CD4-positive, alpha-beta memory T cell (primary cell): ENCODE measurements at regions of chr3 and their contacts with region 1.

Region 1: DNA sequence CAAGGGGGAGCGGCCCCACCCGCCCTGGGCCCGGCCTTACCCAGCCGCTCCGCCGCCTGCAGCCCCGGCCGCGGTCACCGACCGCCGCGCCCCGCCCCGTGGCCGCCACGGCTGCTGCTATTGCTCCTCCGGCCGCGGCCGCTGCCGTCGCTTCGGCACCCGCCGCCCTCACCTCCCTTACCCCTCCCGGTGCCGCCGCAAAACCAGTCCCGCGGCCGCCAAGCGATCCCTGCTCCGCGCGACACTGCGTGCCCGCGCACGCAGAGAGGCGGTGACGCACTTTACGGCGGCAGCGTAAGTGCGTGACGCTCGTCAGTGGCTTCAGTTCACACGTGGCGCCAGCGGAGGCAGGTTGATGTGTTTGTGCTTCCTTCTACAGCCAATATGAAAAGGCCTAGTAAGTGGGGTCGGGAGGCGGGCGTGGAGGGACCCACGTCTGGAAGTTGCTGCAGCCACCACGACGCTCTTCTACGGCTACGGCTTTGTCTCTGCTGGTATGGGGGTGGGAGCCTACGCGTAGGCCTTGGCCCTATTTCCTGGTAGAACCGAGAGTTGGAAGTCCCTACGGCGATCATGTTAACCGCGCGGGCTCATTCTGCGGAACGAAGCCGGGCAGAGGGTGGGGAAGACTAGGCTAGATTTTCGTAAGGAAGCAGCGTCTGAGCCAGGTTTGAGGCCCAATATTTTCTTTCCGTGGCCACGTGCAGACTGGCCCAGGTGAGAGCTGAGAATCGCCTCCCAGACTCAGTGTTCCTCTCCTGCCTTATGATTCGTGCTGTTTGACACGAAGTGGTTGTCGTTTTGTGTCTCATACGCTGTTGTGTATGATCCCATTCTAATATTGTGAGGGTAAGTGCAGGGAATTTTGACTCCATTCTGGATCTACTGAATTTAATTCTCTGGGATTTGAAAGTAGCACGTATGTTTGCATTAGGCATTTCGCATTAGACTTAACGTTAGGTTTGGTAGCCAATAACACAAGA is at the starts of genes GNL3 and PBRM1:
- DNase-seq: peak; percentile 91 to 95 (median 93)
- H3K4me3 ChIP-seq: peak within 1 kb of the TSS; percentile 79 to 96
- H3K4me3 Mint-ChIP-seq: peak within 1 kb of the TSS; percentile 95 to 99 (median 98)
- H3K27ac ChIP-seq: peak within 1 kb of the TSS; percentile 89
- H3K27ac Mint-ChIP-seq: peak within 1 kb of the TSS; percentile 95 to 99 (median 99)
- H3K4me1 ChIP-seq: peaks cover 50% of the 10 kb centered on the region
- H3K4me1 Mint-ChIP-seq: peaks cover 29 to 62% (median 46%) of the 10 kb centered on the region in 4 donors
- H3K27me3 ChIP-seq: no peaks in the 10 kb centered on the region
- H3K27me3 Mint-ChIP-seq: no peaks in the 10 kb centered on the region
- total RNA-seq, gene GNL3: 80.3 to 88.4 TPM
- total RNA-seq, gene PBRM1: 74.2 to 78.5 TPM

Region 2: DNA sequence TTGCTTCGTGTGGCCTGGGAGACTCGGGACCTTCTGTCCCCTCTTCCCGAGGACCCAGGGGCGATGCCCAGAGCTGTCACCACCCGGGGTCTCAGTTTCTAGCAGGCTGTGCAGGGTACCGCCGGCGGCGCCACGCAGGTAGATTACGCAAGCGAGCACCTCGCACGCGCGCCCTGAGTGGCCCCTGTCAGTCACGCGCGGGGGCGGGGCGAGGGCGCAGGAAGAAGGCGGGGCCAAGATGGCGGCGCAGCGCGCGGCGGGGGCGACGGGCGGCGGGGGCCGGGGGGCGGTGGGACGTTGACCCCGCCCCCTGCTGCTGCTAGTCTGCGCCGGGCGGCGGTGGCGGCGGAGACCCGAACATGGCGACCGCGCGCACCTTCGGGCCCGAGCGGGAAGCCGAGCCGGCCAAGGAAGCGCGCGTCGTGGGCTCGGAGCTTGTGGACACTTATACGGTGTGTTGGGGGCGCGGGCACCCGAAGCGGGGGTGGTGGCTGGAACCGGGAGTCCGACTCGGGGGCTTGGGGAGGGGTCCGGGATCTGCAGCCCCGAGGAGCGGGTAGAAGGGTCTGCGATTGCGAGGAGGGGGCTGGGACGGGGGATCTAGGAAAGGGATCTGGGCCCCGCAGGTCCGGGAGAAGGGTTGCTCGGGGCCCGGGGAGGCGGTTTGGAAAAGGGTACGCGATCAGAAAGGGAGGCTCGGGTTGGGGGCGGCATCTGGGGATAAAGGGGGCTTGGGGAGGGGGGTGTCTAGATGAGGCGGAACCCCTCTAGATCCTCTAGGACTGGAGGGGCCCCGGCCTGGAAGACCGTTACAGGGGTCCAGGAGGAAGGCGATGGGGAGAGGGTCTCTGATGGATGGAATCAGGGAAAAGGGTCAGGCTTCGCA is 230.5 kb before region 1 on chr3 and contains the start of gene NISCH:
- CTCF ChIA-PET with region 1: no interaction called
- POLR2A ChIA-PET with region 1: no interaction called
- intact Hi-C with region 1: loop called (anchors 10 kb)
- DNase-seq: peak; percentile 93 to 98 (median 96)
- H3K4me3 ChIP-seq: peak within 1 kb of the TSS; percentile 91 to 97
- H3K4me3 Mint-ChIP-seq: peak within 1 kb of the TSS; percentile 91 to 97 (median 94)
- H3K27ac ChIP-seq: peak within 1 kb of the TSS; percentile 93
- H3K27ac Mint-ChIP-seq: peak within 1 kb of the TSS; percentile 97 to 99 (median 99)
- H3K4me1 ChIP-seq: peaks cover 36% of the 10 kb centered on the region
- H3K4me1 Mint-ChIP-seq: peaks cover 25 to 60% (median 35%) of the 10 kb centered on the region in 4 donors
- H3K27me3 ChIP-seq: no peaks in the 10 kb centered on the region
- H3K27me3 Mint-ChIP-seq: no peaks in the 10 kb centered on the region
- total RNA-seq, gene NISCH: 189 to 205 TPM

Region 3: DNA sequence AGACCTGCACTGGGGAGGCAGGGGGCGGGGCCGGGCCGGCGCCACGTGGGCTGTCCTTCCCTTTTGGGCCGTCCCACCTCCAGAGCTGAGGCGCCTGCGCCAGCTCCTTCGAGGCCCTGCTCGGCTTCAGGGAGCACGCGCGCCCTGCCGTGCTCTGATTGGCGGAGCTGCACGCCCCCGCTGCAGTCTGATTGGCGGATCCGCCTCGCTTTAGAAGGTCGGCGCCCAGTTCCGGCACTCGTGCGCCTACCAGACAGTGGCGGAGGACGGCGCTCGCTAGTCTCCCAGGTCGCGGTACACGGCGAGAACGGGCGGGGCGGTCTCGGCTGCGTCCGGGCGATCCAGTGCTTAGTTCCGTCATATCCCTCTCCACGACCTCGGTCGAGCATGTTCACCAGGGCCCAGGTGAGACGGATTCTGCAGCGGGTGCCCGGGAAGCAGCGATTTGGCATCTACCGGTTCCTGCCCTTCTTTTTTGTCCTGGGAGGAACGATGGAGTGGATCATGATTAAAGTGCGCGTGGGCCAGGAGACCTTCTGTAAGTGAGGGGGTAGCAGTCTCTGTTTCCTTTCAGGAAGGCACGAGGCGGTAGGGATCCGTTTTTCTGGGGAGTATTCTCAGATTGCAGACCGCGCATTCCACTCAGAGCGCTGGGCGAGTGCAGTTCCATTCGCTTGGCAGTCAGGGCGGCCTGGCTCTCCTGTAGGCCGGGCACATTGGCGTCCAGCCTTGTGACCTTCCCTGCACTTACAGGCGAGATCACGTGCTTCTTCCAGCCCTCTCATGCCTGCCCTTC is 149.4 kb before region 1 on chr3 and contains the start of gene UQCC5:
- CTCF ChIA-PET with region 1: no interaction called
- POLR2A ChIA-PET with region 1: no interaction called
- intact Hi-C with region 1: loop called (anchors 5 kb)
- DNase-seq: peak; percentile 96 to 99 (median 98)
- H3K4me3 ChIP-seq: peak within 1 kb of the TSS; percentile 83 to 95
- H3K4me3 Mint-ChIP-seq: peak within 1 kb of the TSS; percentile 98 to 100 (median 100)
- H3K27ac ChIP-seq: peak within 1 kb of the TSS; percentile 74
- H3K27ac Mint-ChIP-seq: peak within 1 kb of the TSS; percentile 94 to 100 (median 99)
- H3K4me1 ChIP-seq: peaks cover 46% of the 10 kb centered on the region
- H3K4me1 Mint-ChIP-seq: peaks cover 24 to 68% (median 49%) of the 10 kb centered on the region in 4 donors
- H3K27me3 ChIP-seq: no peaks in the 10 kb centered on the region
- H3K27me3 Mint-ChIP-seq: no peaks in the 10 kb centered on the region
- total RNA-seq, gene UQCC5: 12.1 to 13.2 TPM

Region 4: DNA sequence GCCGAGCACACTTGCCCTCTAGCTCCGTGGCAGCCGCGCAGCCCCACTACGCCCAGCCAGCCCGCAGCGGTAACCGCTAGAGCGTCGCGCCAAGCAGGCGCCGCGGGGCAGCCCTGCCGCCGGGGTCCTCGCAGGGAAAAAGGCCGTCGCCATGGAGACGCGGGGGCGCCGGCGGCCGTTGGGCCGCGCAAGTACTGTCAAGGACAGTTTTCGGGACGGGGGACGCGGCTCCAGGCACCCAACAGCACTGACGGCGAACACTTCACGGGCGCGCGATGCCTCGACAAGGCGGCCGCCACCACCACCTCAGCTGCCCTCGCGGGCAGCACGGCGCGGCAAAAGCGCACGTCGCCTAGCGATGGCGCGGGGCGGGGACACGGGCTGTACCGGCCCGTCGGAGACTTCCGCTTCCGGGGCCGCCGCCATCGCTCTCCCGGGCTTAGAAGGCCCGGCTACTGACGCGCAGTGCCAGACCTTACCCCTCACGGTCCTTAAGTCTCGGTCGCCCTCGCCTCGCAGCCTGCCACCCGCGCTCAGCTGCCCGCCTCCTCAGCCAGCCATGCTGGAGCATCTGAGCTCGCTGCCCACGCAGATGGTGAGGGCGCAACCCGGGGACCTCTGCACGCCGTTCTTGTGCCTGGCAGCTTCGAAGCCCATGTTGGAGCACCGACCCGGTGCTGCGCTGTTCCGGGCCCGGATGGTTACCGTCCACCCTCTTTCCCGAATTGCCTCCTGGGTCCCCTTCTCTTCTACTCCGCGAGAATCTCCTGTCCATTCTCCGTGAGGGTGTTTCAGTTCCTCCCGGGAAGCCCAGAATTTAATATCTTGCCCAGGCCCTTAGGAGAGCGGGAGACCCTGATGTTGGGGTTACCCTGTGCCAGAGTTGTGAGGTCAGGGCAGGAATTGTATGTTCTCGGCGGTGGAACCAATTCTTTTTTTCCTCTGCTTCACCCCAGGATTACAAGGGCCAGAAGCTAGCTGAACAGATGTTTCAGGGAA is 20.0 kb after region 1 on chr3 and contains the starts of genes GLT8D1 and SPCS1:
- CTCF ChIA-PET with region 1: no interaction called
- POLR2A ChIA-PET with region 1: interaction called, 26 read pairs
- intact Hi-C with region 1: loop called (anchors 1 kb)
- DNase-seq: peak; percentile 88 to 92 (median 91)
- H3K4me3 ChIP-seq: peak within 1 kb of the TSS; percentile 75 to 99
- H3K4me3 Mint-ChIP-seq: peak within 1 kb of the TSS; percentile 92 to 98 (median 96)
- H3K27ac ChIP-seq: peak within 1 kb of the TSS; percentile 87
- H3K27ac Mint-ChIP-seq: peak within 1 kb of the TSS; percentile 95 to 99 (median 97)
- H3K4me1 ChIP-seq: peaks cover 39% of the 10 kb centered on the region
- H3K4me1 Mint-ChIP-seq: peaks cover 16 to 41% (median 27%) of the 10 kb centered on the region in 4 donors
- H3K27me3 ChIP-seq: no peaks in the 10 kb centered on the region
- H3K27me3 Mint-ChIP-seq: no peaks in the 10 kb centered on the region
- total RNA-seq, gene GLT8D1: 49.7 to 49.9 TPM
- total RNA-seq, gene SPCS1: 90.5 to 94.7 TPM

Region 5: GRCh38 chr3:52770496-52771333 is 84.7 kb after region 1 on chr3 and contains the start of gene NEK4:
- CTCF ChIA-PET with region 1: no interaction called
- POLR2A ChIA-PET with region 1: interaction called, 4 read pairs
- intact Hi-C with region 1: loop called (anchors 1 kb)
- DNase-seq: peak; percentile 72 to 84 (median 80)
- H3K4me3 ChIP-seq: peak within 1 kb of the TSS; percentile 53 to 56
- H3K4me3 Mint-ChIP-seq: peak within 1 kb of the TSS; percentile 96 to 100 (median 97)
- H3K27ac ChIP-seq: peak within 1 kb of the TSS; percentile 59
- H3K27ac Mint-ChIP-seq: peak within 1 kb of the TSS; percentile 88 to 98 (median 94)
- H3K4me1 ChIP-seq: peaks cover 17% of the 10 kb centered on the region
- H3K4me1 Mint-ChIP-seq: peaks cover 13 to 32% (median 20%) of the 10 kb centered on the region in 4 donors
- H3K27me3 ChIP-seq: no peaks in the 10 kb centered on the region
- H3K27me3 Mint-ChIP-seq: no peaks in the 10 kb centered on the region
- total RNA-seq, gene NEK4: 26.8 to 27.9 TPM

Region 6: GRCh38 chr3:52781741-52782140 is 95.7 kb after region 1 on chr3:
- CTCF ChIA-PET with region 1: no interaction called
- POLR2A ChIA-PET with region 1: no interaction called
- intact Hi-C with region 1: no loop called
- DNase-seq: no peak
- H3K4me3 ChIP-seq: no peak overlapping the region
- H3K4me3 Mint-ChIP-seq: no peak overlapping the region
- H3K27ac ChIP-seq: no peak overlapping the region
- H3K27ac Mint-ChIP-seq: no peak overlapping the region
- H3K4me1 ChIP-seq: no peaks in the 10 kb centered on the region
- H3K4me1 Mint-ChIP-seq: no peaks in the 10 kb centered on the region
- H3K27me3 ChIP-seq: no peaks in the 10 kb centered on the region
- H3K27me3 Mint-ChIP-seq: peaks cover 0 to 5% of the 10 kb centered on the region in 2 donors

Region 7: DNA sequence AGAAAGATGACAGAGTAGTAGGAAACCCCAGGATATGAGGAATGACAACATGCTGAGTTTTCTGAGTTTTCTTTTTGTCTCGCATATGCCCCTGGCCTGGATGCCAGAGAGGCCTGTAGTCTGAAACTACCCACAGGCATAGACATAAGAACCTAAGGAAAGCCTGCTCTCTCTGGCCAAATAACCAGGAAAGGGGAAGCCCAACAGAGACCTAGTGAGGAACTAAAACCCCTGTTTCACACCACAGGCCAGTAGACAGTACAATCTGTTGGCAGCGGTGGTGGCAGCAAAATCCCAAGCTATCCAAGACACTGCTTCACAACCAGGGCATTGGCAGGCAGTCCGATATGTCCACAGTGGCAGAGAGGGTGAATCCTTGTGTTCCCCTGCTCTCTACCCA is 716.3 kb after region 1 on chr3:
- CTCF ChIA-PET with region 1: no interaction called
- POLR2A ChIA-PET with region 1: no interaction called
- intact Hi-C with region 1: no loop called
- DNase-seq: no peak
- H3K4me3 ChIP-seq: no peak overlapping the region
- H3K4me3 Mint-ChIP-seq: no peak overlapping the region
- H3K27ac ChIP-seq: no peak overlapping the region
- H3K27ac Mint-ChIP-seq: no peak overlapping the region
- H3K4me1 ChIP-seq: no peaks in the 10 kb centered on the region
- H3K4me1 Mint-ChIP-seq: no peaks in the 10 kb centered on the region
- H3K27me3 ChIP-seq: no peaks in the 10 kb centered on the region
- H3K27me3 Mint-ChIP-seq: peaks cover 12 to 16% of the 10 kb centered on the region in 2 donors